ENCODE measurements at regions of chr1 and their contacts with region 1.

Region 1: GRCh38 chr1:21048462-21048861 is 128.2 kb downstream of the EIF4G3 start:
- DNase-seq: no peak
- ATAC-seq: peak; percentile 47; the same call in 2 of the 3 replicates
- H3K4me3 ChIP-seq: no peak overlapping the region
- H3K27ac ChIP-seq: no peak overlapping the region
- H3K4me1 ChIP-seq: no peaks in the 10 kb centered on the region; a peak in 1 of 5 replicates
- H3K27me3 ChIP-seq: no peaks in the 10 kb centered on the region
- CTCF ChIP-seq: peak in 1 of 3 experiments; percentile 43; a peak in 2 of 6 replicates
- EP300 ChIP-seq: no peak
- POLR2A ChIP-seq: no peak
- RAD21 ChIP-seq: peak; percentile 15 to 39; a peak in 2 of 4 replicates

Region 2: GRCh38 chr1:21034725-21035628 is 13.5 kb before region 1 on chr1:
- CTCF ChIA-PET with region 1: no interaction called
- POLR2A ChIA-PET with region 1: interaction called, 22 read pairs
- in situ Hi-C with region 1: no loop called
- intact Hi-C with region 1: no loop called
- DNase-seq: no peak
- ATAC-seq: no peak
- H3K4me3 ChIP-seq: no peak overlapping the region
- H3K27ac ChIP-seq: no peak overlapping the region
- H3K4me1 ChIP-seq: peaks cover 0 to 16% of the 10 kb centered on the region in 2 experiments; a peak in 1 of 5 replicates
- H3K27me3 ChIP-seq: no peaks in the 10 kb centered on the region
- CTCF ChIP-seq: no peak
- EP300 ChIP-seq: no peak
- POLR2A ChIP-seq: no peak
- RAD21 ChIP-seq: no peak

Region 3: GRCh38 chr1:21082073-21082472 is 33.6 kb after region 1 on chr1:
- CTCF ChIA-PET with region 1: no interaction called
- POLR2A ChIA-PET with region 1: no interaction called
- in situ Hi-C with region 1: no loop called
- intact Hi-C with region 1: no loop called
- DNase-seq: no peak
- ATAC-seq: no peak
- H3K4me3 ChIP-seq: no peak overlapping the region
- H3K27ac ChIP-seq: no peak overlapping the region
- H3K4me1 ChIP-seq: no peaks in the 10 kb centered on the region
- H3K27me3 ChIP-seq: no peaks in the 10 kb centered on the region
- CTCF ChIP-seq: no peak
- EP300 ChIP-seq: no peak
- POLR2A ChIP-seq: no peak
- RAD21 ChIP-seq: no peak

Region 4: GRCh38 chr1:21200767-21201166 is 152.3 kb after region 1 on chr1:
- CTCF ChIA-PET with region 1: interaction called, 3 read pairs
- POLR2A ChIA-PET with region 1: no interaction called
- in situ Hi-C with region 1: no loop called
- intact Hi-C with region 1: loop called (anchors 2 kb)
- DNase-seq: peak in 1 of 4 experiments; percentile 46
- ATAC-seq: peak; percentile 71
- H3K4me3 ChIP-seq: no peak overlapping the region
- H3K27ac ChIP-seq: no peak overlapping the region
- H3K4me1 ChIP-seq: no peaks in the 10 kb centered on the region; a peak in 1 of 5 replicates
- H3K27me3 ChIP-seq: peaks cover 4 to 12% of the 10 kb centered on the region in 2 experiments; a peak in 3 of 5 replicates
- CTCF ChIP-seq: no peak
- EP300 ChIP-seq: no peak
- POLR2A ChIP-seq: no peak
- RAD21 ChIP-seq: no peak